Tibial artery (tissue), 4 donors: ENCODE measurements at regions of chr7 and their contacts with region 1.

Region 1: GRCh38 chr7:148575640-148576411 is 14.7 kb upstream of the C7orf33 start:
- DNase-seq: peak; percentile 68 to 71
- H3K4me3 ChIP-seq: no peak overlapping the region
- H3K27ac ChIP-seq: no peak overlapping the region
- H3K4me1 ChIP-seq: no peaks in the 10 kb centered on the region
- H3K27me3 ChIP-seq: peaks cover 0 to 3% of the 10 kb centered on the region in 2 donors
- CTCF ChIP-seq: peak; percentile 69 to 70

Region 2: GRCh38 chr7:148611692-148612091 is 35.9 kb after region 1 on chr7:
- intact Hi-C with region 1: no loop called
- DNase-seq: no peak
- H3K4me3 ChIP-seq: no peak overlapping the region
- H3K27ac ChIP-seq: no peak overlapping the region
- H3K4me1 ChIP-seq: no peaks in the 10 kb centered on the region
- H3K27me3 ChIP-seq: peaks cover 0 to 5% of the 10 kb centered on the region in 2 donors
- CTCF ChIP-seq: no peak

Region 3: DNA sequence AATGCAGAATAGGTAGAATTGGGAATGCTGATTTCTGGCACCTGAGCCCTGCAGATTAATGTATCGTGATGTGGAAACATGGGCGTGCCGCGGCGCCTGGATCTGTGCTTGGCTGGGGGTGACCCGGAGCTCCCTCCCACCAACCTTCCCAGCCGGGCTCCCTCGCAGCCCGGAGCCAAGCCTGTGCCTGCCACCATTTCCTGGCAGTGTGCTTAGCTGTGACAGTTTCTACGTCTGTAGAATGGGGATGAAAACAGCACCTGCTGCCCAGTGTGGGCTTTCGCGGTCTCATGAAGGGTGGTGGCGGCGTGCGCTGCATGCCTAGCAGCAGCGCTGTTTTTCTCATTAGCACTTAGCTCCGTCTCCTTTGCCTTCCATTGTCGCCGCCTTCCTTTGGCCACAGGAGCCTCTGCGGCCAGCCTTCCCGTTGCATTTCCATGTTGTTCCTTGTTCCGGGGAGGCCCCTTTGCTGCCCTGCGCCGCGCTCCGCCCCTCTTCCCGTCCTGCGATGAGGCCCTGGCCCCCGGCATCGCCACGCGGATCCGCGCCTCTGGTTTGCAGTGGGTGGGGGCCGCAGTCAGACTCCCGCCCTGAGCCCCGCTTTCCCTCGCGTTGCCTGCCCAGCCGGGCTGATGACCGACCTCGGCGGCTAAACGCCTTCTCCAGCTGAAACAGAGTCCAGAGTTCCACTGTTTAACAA is 207.1 kb after region 1 on chr7:
- intact Hi-C with region 1: loop called (anchors 5 kb)
- DNase-seq: no peak
- H3K4me3 ChIP-seq: no peak overlapping the region
- H3K27ac ChIP-seq: no peak overlapping the region
- H3K4me1 ChIP-seq: no peaks in the 10 kb centered on the region
- H3K27me3 ChIP-seq: no peaks in the 10 kb centered on the region
- CTCF ChIP-seq: no peak

Region 4: DNA sequence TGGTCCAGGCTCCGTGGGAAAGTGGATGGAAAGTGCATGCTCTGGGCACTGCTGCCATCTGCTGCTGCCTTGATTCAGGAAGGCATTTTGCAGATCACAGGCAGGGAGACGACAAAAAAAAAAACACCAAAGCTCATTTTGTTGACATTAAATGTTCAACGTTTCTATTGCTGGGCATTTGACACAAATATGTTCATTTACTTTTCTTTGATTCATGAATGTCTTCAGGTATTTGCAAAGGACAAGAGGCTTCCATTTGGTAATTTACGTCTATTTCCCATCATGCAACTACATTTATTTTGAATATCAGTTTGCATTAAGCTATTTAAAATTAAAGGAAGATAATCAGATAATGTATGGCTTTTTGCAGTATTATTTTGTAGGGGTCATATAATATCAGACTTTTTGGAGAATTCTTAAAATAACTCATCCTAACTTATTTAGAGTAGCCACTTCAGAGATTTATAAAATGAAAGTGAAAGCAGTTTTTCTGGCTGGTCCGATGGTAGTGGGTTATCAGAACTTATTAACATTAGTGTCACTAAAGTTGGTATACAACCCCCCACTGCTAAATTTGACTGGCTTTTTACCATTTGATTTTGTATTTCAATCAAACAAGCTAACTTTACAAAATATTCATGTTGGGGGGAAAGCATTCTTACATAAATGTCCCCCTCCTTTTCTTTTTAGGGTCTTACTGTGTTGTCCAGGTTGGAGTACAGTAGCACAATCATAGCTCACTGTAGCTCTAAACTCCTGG is 387.2 kb after region 1 on chr7:
- intact Hi-C with region 1: loop called (anchors 5 kb)
- DNase-seq: peak; percentile 54 to 77
- H3K4me3 ChIP-seq: peak overlapping the region; percentile 50 to 61
- H3K27ac ChIP-seq: peak overlapping the region; percentile 72 to 75
- H3K4me1 ChIP-seq: peaks cover 0 to 21% (median 11%) of the 10 kb centered on the region in 4 donors
- H3K27me3 ChIP-seq: no peaks in the 10 kb centered on the region
- CTCF ChIP-seq: peak; percentile 28 to 69